Posterior vena cava (tissue), 2 donors: ENCODE measurements at regions of chr4 and their contacts with region 1.

Region 1: DNA sequence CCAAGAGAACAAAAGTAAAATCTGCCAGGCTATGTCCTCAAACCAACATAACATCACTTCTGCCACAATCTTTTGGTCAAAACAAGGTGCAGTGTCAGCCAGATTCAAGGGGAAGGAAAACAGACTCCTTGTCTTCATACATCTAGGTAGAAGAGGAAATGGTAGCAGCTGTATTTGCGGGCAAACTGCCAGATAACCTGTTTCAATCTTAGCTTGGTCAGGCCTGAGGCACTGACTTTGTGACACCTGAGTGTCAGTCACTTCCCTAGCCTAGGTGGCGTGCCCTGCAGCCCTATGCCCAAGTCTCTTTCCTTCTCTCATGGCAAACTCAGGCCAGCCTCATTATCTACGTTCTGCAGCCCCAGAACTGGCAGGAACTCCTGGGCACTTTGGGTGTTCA is 146.2 kb upstream of the JADE1 start:
- DNase-seq: no peak

Region 2: GRCh38 chr4:128574706-128575105 is 88.6 kb before region 1 on chr4:
- intact Hi-C with region 1: loop called in 1 of 2 experiments (anchors 10 kb)
- DNase-seq: no peak